ENCODE measurements at regions of chr5 and their contacts with region 1.

Region 1: GRCh38 chr5:26024774-26025173 is 1013.6 kb downstream of the CDH9 start:
- DNase-seq: peak; percentile 5
- ATAC-seq: peak; percentile 46; the same call in 1 of the 3 replicates
- H3K4me3 ChIP-seq: no peak overlapping the region
- H3K27ac ChIP-seq: no peak overlapping the region
- H3K4me1 ChIP-seq: no peaks in the 10 kb centered on the region
- H3K27me3 ChIP-seq: no peaks in the 10 kb centered on the region
- CTCF ChIP-seq: 0 out of 2 replicates have a peak, but pooled peaks have one; percentile 24
- EP300 ChIP-seq: no peak
- POLR2A ChIP-seq: no peak
- RAD21 ChIP-seq: no peak

Region 2: GRCh38 chr5:25119653-25120052 is 905.1 kb before region 1 on chr5:
- CTCF ChIA-PET with region 1: no interaction called
- POLR2A ChIA-PET with region 1: no interaction called
- in situ Hi-C with region 1: no loop called
- intact Hi-C with region 1: no loop called
- DNase-seq: peak; percentile 1
- ATAC-seq: no peak
- H3K4me3 ChIP-seq: no peak overlapping the region
- H3K27ac ChIP-seq: no peak overlapping the region
- H3K4me1 ChIP-seq: no peaks in the 10 kb centered on the region
- H3K27me3 ChIP-seq: no peaks in the 10 kb centered on the region
- CTCF ChIP-seq: no peak
- EP300 ChIP-seq: no peak
- POLR2A ChIP-seq: no peak
- RAD21 ChIP-seq: no peak

Region 3: DNA sequence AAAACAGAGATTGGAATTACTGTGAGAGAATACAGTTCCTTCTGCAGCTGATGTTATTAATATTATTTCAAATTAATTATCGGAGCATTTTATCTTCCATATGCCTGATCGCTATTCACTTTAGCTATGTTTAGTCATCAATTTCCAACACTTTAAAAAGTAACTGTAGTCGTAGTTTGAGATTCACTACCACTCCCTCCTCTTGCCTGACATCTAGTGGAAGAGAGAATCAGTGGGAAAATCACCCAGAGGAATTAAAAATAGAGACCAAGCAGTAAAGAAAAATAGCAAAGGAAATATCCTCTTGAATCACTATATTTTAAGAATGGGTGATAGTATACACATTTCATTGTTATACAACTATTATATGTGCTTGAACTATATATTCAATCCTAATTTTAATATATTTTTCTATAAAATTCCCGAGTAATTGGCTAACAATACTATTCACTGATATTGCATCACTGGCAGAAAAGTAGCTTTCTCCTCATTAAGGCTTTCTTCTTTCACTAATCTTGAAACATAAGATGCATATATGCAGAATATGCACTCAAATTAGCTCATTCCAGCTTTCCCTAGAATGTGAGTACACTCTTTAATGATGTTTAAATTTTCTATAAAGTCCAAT is 304.9 kb after region 1 on chr5:
- CTCF ChIA-PET with region 1: no interaction called
- POLR2A ChIA-PET with region 1: no interaction called
- in situ Hi-C with region 1: no loop called
- intact Hi-C with region 1: loop called (anchors 10 kb)
- DNase-seq: no peak
- ATAC-seq: no peak
- H3K4me3 ChIP-seq: no peak overlapping the region
- H3K27ac ChIP-seq: no peak overlapping the region
- H3K4me1 ChIP-seq: no peaks in the 10 kb centered on the region
- H3K27me3 ChIP-seq: no peaks in the 10 kb centered on the region
- CTCF ChIP-seq: peak; percentile 31
- EP300 ChIP-seq: no peak
- POLR2A ChIP-seq: no peak
- RAD21 ChIP-seq: no peak

Region 4: DNA sequence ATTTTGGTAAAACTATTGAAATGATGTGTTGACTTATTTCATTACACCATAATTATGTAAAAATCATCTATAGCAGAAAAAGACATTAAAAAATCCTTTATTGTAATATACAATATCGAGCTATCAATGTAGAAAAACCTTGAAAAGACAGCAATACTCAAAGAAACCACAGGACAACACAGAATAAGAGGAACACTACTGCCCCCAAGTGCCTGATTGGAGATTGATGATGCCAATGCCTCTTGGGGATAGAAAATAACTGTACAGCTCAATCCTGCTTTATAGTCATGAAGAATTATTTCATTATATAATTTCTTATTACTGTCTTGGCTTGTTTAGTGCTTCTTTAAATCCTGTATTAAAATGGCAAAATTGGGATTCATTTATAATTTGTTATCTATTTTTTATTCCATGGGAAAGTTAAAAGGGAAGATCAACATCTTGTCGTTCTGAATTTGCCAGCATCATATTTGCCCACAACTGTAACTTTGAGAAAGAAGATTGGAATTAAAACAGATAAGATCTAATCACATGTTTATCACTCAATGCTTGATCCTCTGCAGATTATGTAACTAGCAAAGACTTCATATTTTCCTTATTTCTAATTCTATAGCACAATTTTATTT is 676.1 kb after region 1 on chr5:
- CTCF ChIA-PET with region 1: no interaction called
- POLR2A ChIA-PET with region 1: no interaction called
- in situ Hi-C with region 1: no loop called
- intact Hi-C with region 1: loop called (anchors 2 kb)
- DNase-seq: peak; percentile 45
- ATAC-seq: peak; percentile 88
- H3K4me3 ChIP-seq: no peak overlapping the region
- H3K27ac ChIP-seq: no peak overlapping the region
- H3K4me1 ChIP-seq: no peaks in the 10 kb centered on the region
- H3K27me3 ChIP-seq: no peaks in the 10 kb centered on the region
- CTCF ChIP-seq: peak; percentile 52
- EP300 ChIP-seq: no peak
- POLR2A ChIP-seq: no peak
- RAD21 ChIP-seq: no peak

Measured in HepG2 (cell line).